ENCODE measurements at regions of chr5 and their contacts with region 1.

Region 1: GRCh38 chr5:134086943-134087305 is 27.6 kb upstream of the TCF7 start:
- DNase-seq: peak; percentile 51 to 88 (median 81)
- ATAC-seq: peak; percentile 68
- H3K4me3 ChIP-seq: peak overlapping the region in 1 of 2 experiments; percentile 5
- H3K4me3 Mint-ChIP-seq: peak overlapping the region; percentile 64
- H3K27ac ChIP-seq: peak overlapping the region; percentile 16 to 28
- H3K27ac Mint-ChIP-seq: peak overlapping the region; percentile 89
- H3K4me1 ChIP-seq: peaks cover 87% of the 10 kb centered on the region
- H3K4me1 Mint-ChIP-seq: peaks cover 85% of the 10 kb centered on the region
- H3K27me3 ChIP-seq: peaks cover 0 to 2% of the 10 kb centered on the region in 2 experiments
- H3K27me3 Mint-ChIP-seq: no peaks in the 10 kb centered on the region
- CTCF ChIP-seq: no peak

Region 2: DNA sequence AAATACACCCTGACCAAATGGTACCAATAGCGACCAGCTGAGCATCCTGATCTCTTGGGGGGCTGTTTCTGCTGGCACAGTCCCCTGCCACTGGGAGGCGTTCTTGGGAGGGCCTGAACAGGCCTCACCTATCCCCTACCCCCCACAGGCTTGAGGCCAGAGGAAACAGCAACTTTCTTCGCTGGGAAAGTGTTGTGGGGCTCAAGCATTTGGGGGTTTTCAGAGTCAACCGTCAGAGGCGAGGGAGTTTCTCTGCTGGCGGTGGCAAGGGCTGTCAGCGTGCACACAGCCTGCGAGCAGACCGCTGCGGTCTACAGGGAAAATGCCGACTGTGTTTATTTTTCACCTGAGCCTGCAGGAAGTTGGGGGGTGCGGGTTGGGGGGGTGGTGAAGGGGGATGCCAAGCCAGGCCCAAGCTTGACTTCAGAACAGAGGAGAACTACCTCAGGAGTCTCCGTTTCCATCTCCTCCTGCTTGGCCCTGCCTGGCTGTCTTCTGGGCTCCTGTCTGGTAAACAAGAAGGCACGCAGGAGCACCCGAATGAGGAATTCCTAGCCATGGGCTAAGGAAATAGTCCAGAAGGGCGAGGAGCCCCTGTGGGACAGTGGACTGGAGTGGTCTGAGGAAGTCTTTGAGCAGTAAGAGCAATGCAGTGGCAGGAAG is 45.6 kb after region 1 on chr5:
- CTCF ChIA-PET with region 1: no interaction called
- POLR2A ChIA-PET with region 1: no interaction called
- intact Hi-C with region 1: loop called in 1 of 2 experiments (anchors 2 kb)
- DNase-seq: peak; percentile 72 to 99 (median 85)
- ATAC-seq: peak; percentile 70
- H3K4me3 ChIP-seq: peak overlapping the region; percentile 16 to 52
- H3K4me3 Mint-ChIP-seq: peak overlapping the region; percentile 95
- H3K27ac ChIP-seq: peak overlapping the region; percentile 64 to 88
- H3K27ac Mint-ChIP-seq: peak overlapping the region; percentile 96
- H3K4me1 ChIP-seq: peaks cover 98% of the 10 kb centered on the region
- H3K4me1 Mint-ChIP-seq: peaks cover 95% of the 10 kb centered on the region
- H3K27me3 ChIP-seq: no peaks in the 10 kb centered on the region
- H3K27me3 Mint-ChIP-seq: no peaks in the 10 kb centered on the region
- CTCF ChIP-seq: peak; percentile 44

Region 3: DNA sequence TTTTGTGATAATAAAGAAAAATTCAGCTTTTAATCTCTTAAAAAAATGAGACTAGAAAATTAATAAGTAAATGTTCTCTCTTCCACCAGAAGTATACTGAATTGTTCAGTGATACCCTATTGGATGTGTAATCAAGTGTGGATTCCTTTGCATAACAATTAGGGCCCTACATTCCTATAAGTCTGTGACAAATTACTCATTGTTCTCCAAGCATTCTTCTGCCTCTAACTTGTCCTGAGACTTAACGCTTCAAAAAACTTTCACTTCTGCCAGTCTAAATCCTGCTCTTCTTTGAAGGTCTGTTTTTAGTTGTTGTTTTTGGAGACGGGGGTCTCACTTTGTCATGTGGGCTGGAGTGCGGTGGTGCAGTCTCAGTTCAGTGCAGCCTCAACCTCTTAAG is 662.5 kb after region 1 on chr5:
- CTCF ChIA-PET with region 1: no interaction called
- POLR2A ChIA-PET with region 1: no interaction called
- intact Hi-C with region 1: no loop called
- DNase-seq: no peak
- ATAC-seq: no peak
- H3K4me3 ChIP-seq: no peak overlapping the region
- H3K4me3 Mint-ChIP-seq: no peak overlapping the region
- H3K27ac ChIP-seq: no peak overlapping the region
- H3K27ac Mint-ChIP-seq: peak overlapping the region; percentile 18
- H3K4me1 ChIP-seq: no peaks in the 10 kb centered on the region
- H3K4me1 Mint-ChIP-seq: peaks cover 1% of the 10 kb centered on the region
- H3K27me3 ChIP-seq: no peaks in the 10 kb centered on the region
- H3K27me3 Mint-ChIP-seq: no peaks in the 10 kb centered on the region
- CTCF ChIP-seq: no peak

Measured in CD8-positive, alpha-beta T cell (primary cell).